ENCODE measurements at regions of chr19 and their contacts with region 1.

Region 1: DNA sequence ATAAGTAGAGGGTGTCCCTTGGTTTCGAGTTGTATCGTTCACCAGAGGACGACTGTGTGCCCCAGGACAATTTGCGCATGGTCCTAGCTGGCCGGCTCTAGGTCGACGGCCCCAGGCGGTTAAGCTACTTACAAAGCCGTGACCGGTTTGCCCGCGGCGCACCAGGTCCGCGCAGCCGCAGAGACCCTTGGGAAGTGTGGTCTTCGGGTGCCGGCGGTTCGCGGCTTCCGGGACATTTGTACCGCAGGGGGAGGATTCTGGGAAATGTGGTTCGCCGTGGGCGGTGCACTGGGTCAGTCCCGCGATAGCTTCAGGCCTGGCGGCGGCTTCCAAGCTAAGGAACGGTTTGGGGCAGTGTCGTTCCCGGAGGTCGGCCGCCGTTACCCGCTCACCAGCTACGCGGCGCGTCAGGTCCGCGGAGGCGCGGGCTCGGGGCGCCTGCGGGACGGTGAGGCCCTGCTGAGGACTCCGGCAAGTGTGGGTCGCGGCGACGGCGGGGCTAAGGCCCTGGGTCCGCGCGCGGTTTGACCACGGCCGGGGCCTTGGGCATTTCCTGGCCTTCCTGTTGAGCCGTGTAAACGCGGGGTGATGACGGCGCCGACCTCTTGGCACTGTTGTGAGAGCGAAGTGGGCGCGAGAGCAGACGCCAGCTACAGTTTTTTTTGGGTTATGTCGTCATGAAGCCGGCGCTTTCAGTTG is at the start of gene ZNF302:
- DNase-seq: peak; percentile 98 to 99
- ATAC-seq: peak; percentile 98
- H3K4me3 ChIP-seq: peak within 1 kb of the TSS; percentile 24 to 76
- H3K27ac ChIP-seq: peak within 1 kb of the TSS; percentile 78 to 93
- H3K4me1 ChIP-seq: peaks cover 0 to 3% of the 10 kb centered on the region in 2 donors
- H3K27me3 ChIP-seq: no peaks in the 10 kb centered on the region
- total RNA-seq, gene ZNF302: 20.5 to 37.3 TPM

Region 2: GRCh38 chr19:34359140-34359953 is 318.2 kb before region 1 on chr19:
- intact Hi-C with region 1: no loop called
- DNase-seq: peak; percentile 98 to 99
- ATAC-seq: peak; percentile 97
- H3K4me3 ChIP-seq: peak overlapping the region; percentile 4 to 7
- H3K27ac ChIP-seq: peak overlapping the region in 1 of 2 donors; percentile 37
- H3K4me1 ChIP-seq: no peaks in the 10 kb centered on the region
- H3K27me3 ChIP-seq: no peaks in the 10 kb centered on the region

Region 3: GRCh38 chr19:34712395-34713261 is 35.1 kb after region 1 on chr19:
- intact Hi-C with region 1: no loop called
- DNase-seq: no peak
- ATAC-seq: peak; percentile 71
- H3K4me3 ChIP-seq: no peak overlapping the region
- H3K27ac ChIP-seq: no peak overlapping the region
- H3K4me1 ChIP-seq: no peaks in the 10 kb centered on the region
- H3K27me3 ChIP-seq: peaks cover 0 to 1% of the 10 kb centered on the region in 2 donors

Region 4: DNA sequence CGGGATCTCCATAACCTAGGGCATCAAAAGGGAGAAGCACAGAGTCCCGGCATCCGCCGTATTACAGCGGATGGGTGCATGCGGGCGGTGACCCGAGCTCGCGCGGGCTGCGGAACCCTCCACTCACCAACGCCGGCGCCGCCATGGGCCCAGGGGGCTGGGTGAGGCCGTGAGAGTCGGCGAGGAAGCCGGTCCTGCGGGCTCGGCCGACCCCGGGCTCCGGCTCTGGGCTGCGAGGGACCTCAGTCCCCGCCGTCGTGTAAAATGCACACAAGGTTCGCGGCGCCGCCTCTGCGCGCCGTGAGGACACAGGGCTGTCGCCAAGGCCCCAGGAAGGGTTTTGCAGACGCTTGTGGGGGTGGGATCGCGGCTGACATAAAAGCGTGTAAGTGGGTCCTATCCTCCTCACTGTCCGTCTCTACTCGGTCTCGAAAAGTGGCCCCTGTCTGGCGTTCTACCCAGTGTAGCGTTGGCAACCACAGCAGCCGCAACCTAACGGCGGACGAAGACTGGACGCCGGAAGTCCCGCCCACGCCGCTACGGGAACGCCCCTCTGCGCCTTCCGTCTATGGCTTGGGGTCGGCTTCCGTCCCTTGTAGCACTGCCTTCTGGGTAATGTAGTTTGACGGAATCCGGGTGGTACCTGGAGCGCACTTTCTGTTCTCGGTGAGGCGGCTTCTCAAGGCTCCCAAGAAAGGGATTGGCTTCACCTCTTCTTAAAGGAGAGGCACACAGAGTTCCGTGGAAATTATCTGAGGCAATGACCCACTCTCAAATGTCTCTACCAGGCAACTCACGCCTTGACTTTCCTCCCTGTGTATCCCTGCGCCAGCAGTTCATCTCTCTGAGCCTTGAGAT is 95.4 kb after region 1 on chr19 and contains the start of gene ZNF599:
- intact Hi-C with region 1: loop called in 1 of 2 experiments (anchors 5 kb)
- DNase-seq: peak; percentile 95 to 98
- ATAC-seq: peak; percentile 99
- H3K4me3 ChIP-seq: peak within 1 kb of the TSS; percentile 61 to 77
- H3K27ac ChIP-seq: peak within 1 kb of the TSS in 1 of 2 donors; percentile 11
- H3K4me1 ChIP-seq: no peaks in the 10 kb centered on the region
- H3K27me3 ChIP-seq: no peaks in the 10 kb centered on the region
- total RNA-seq, gene ZNF599: 4.4 to 7.8 TPM

Measured in aorta (tissue), 5 donors.